ENCODE measurements at regions of chr10 and their contacts with region 1.

Region 1: DNA sequence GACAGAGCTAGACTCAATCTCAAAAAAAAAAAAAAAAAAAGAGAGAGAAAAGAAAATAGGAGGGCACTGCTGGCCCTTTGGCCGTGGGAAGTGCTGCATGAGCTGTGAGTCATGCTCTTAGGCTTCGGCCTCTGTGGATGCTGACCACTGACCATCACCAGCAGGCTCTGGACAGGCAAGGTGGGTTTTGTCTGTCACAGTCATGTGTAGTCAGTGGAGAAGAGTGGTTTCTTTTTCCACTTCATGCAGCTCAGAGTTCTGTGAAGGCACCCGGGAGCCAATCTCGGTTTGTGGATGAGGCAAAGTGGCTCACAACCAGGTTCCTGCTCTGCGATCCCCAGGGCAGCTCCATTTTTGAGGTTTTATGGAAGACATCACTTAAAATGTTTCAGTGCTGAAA is 58.1 kb downstream of the PRTFDC1 start:
- DNase-seq: no peak
- ATAC-seq: peak; percentile 40
- H3K4me3 ChIP-seq: no peak overlapping the region
- H3K27ac ChIP-seq: no peak overlapping the region
- H3K4me1 ChIP-seq: peaks cover 3% of the 10 kb centered on the region; the same call in 1 of the 2 replicates
- H3K27me3 ChIP-seq: no peaks in the 10 kb centered on the region
- CTCF ChIP-seq: no peak
- EP300 ChIP-seq: no peak
- POLR2A ChIP-seq: no peak
- RAD21 ChIP-seq: no peak

Region 2: DNA sequence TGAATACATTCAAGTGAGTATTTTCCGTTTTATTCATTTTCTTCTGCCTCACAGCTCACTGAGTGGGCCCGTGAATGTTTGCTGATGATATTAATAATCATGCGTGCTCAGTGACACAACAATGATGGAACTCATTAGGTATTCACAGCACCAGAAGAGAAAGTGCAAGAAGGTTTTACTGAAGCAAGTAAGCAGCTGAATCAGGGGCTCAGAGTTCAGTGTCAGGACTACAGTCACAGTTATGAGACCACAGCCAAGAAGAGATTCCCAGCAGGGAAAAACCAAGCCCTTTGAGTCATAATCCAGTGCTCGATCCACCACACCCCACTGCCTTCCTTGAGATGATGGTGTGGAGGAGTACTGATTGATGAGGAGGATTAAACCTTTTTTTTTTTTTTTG is 438.0 kb before region 1 on chr10:
- CTCF ChIA-PET with region 1: no interaction called
- POLR2A ChIA-PET with region 1: no interaction called
- RAD21 ChIA-PET with region 1: no interaction called
- SMC1A ChIA-PET with region 1: no interaction called
- in situ Hi-C with region 1: no loop called
- intact Hi-C with region 1: no loop called
- DNase-seq: no peak
- ATAC-seq: peak; percentile 28; the same call in 2 of the 3 replicates
- H3K4me3 ChIP-seq: no peak overlapping the region
- H3K27ac ChIP-seq: no peak overlapping the region
- H3K4me1 ChIP-seq: no peaks in the 10 kb centered on the region
- H3K27me3 ChIP-seq: no peaks in the 10 kb centered on the region
- CTCF ChIP-seq: no peak
- EP300 ChIP-seq: no peak
- POLR2A ChIP-seq: no peak
- RAD21 ChIP-seq: no peak

Region 3: DNA sequence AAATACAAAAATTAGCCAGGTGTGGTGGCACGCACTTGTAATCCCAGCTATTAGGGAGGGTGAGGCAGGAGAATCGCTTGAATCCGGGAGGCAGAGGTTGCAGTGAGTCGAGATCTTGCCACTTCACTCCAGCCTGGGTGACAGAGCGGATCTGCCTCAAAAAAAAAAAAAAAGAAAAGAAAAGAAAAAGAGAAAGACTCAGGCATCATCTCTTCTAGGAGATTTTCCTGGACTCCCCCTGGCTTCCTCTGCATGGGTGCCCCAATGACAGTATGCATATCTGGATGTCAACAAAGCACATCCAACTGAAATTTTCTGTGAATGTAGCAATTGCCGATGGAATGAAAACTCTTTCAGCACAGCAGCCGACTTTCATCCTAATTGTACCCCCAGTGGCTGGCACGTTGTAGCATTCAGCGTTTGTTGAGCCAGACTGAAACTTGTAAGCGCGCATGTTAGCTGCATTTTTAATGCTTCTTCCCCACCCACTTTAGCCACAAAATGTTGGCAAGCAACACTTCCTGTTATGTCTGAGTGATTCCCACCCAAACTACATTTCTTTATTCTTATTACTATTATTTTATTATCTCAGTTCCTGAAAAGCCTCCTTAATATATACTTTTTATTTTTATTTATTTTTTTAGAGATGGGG is 12.1 kb before region 1 on chr10:
- CTCF ChIA-PET with region 1: interaction called, 10 read pairs
- POLR2A ChIA-PET with region 1: interaction called, 19 read pairs
- RAD21 ChIA-PET with region 1: interaction called, 4 read pairs
- SMC1A ChIA-PET with region 1: interaction called, 37 read pairs
- in situ Hi-C with region 1: no loop called
- intact Hi-C with region 1: no loop called
- DNase-seq: peak; percentile 53
- ATAC-seq: peak; percentile 77
- H3K4me3 ChIP-seq: no peak overlapping the region
- H3K27ac ChIP-seq: no peak overlapping the region
- H3K4me1 ChIP-seq: no peaks in the 10 kb centered on the region
- H3K27me3 ChIP-seq: no peaks in the 10 kb centered on the region
- CTCF ChIP-seq: no peak
- EP300 ChIP-seq: no peak
- POLR2A ChIP-seq: no peak
- RAD21 ChIP-seq: no peak

Measured in GM12878 (cell line).